Breast epithelium (tissue), 4 donors: ENCODE measurements at regions of chr9 and their contacts with region 1.

Region 1: DNA sequence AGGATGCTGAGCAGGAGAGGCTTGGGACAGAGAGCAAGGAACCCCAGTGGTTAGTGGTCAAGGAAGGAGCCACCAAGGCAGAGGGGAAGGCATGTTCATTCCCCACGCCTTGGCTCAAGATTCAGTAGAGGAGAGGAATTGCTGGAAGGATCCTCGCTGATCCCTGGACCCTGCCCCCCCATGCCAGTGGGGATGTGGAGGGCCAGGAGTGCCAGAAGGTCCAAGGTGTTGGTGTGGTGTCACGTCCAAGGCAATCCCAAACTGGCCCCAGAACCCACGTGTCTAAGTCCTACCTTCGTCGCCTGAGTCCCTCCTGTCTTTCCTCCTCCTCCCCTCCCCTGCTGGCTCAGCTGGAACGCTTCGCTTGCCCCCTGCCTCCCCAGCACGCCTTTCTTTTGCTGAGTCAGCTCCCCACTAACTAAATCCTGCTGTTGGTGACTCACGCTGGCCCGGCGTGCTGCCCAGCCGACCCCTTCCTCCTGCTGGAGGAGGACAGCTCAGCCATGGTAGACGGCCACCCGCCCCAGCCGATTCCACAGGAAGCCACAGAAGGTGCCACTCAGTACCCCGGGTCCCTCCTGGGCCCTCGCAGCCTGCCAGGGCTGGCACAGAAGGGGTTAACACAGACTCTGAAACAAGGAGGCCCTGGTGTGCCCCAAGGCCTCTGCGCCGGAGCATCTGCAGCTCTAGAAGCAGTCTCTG is 37.6 kb upstream of the ORM1 start:
- DNase-seq: peak in 1 of 2 donors; percentile 47
- H3K4me3 ChIP-seq: no peak overlapping the region
- H3K27ac ChIP-seq: peak overlapping the region in 1 of 2 donors; percentile 43
- H3K4me1 ChIP-seq: no peaks in the 10 kb centered on the region
- H3K27me3 ChIP-seq: no peaks in the 10 kb centered on the region
- CTCF ChIP-seq: no peak
- POLR2A ChIP-seq: no peak

Region 2: GRCh38 chr9:114082017-114082762 is 203.1 kb before region 1 on chr9:
- intact Hi-C with region 1: loop called (anchors 5 kb)
- DNase-seq: peak; percentile 87 to 94
- H3K4me3 ChIP-seq: no peak overlapping the region
- H3K27ac ChIP-seq: no peak overlapping the region
- H3K4me1 ChIP-seq: no peaks in the 10 kb centered on the region
- H3K27me3 ChIP-seq: no peaks in the 10 kb centered on the region
- CTCF ChIP-seq: peak; percentile 89 to 95 (median 92)
- POLR2A ChIP-seq: no peak